CD4-positive, alpha-beta T cell (primary cell): ENCODE measurements at regions of chr16 and their contacts with region 1.

Region 1: DNA sequence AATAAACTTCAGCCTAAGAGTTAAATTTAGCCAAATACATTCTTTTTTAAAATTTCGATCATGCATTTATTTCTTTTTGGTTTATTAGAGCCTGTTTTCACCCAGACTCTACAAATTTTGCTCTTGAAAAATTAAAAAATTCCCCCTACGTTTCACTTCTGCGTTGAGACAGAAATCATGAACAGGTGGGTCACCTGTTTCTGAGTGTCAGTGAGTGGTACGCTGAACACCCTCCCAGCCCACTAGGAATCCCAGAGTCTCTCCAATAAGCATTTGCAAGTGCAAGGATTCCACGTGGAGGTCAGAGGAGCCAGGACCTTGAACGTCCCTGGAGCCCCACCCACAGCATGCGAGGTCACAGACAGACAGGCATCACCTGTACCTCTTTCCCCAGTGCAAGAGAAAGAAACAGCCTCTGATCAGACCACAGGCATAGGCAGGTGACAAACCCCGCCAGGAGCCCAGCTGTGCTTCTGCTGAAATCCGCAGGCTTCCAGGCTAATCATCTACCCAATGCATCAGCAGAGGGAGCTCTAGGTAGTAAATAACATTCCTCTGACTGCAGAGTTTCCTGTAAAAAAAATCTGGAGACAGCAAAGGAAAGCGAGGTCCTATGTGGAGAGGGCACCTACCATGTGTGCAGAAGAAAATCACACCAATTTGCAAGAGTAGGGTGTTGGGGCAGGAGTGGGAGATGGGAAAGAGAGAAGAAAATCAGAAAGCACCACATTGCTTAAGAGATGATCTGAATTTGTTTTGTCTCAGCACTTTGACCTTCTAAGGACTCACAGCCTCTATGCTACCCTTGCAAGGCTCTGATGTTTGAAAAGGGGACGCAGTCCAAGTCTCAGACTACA is 5.9 kb upstream of the XYLT1 start:
- DNase-seq: peak; percentile 24 to 77 (median 42)
- ATAC-seq: peak; percentile 85
- H3K4me3 ChIP-seq: no peak overlapping the region
- H3K4me3 Mint-ChIP-seq: no peak overlapping the region
- H3K27ac ChIP-seq: no peak overlapping the region
- H3K27ac Mint-ChIP-seq: no peak overlapping the region
- H3K4me1 ChIP-seq: peaks cover 20% of the 10 kb centered on the region
- H3K4me1 Mint-ChIP-seq: peaks cover 33% of the 10 kb centered on the region
- H3K27me3 ChIP-seq: peaks cover 0 to 2% of the 10 kb centered on the region in 2 experiments
- H3K27me3 Mint-ChIP-seq: peaks cover 7% of the 10 kb centered on the region
- CTCF ChIP-seq: peak; percentile 73

Region 2: GRCh38 chr16:16861546-16861945 is 615.1 kb before region 1 on chr16:
- CTCF ChIA-PET with region 1: no interaction called
- POLR2A ChIA-PET with region 1: no interaction called
- intact Hi-C with region 1: loop called (anchors 2 to 5 kb)
- DNase-seq: peak; percentile 35 to 71 (median 44)
- ATAC-seq: no peak
- H3K4me3 ChIP-seq: no peak overlapping the region
- H3K4me3 Mint-ChIP-seq: no peak overlapping the region
- H3K27ac ChIP-seq: no peak overlapping the region
- H3K27ac Mint-ChIP-seq: no peak overlapping the region
- H3K4me1 ChIP-seq: peaks cover 3% of the 10 kb centered on the region
- H3K4me1 Mint-ChIP-seq: no peaks in the 10 kb centered on the region
- H3K27me3 ChIP-seq: peaks cover 0 to 2% of the 10 kb centered on the region in 2 experiments
- H3K27me3 Mint-ChIP-seq: peaks cover 14% of the 10 kb centered on the region
- CTCF ChIP-seq: peak; percentile 82

Region 3: GRCh38 chr16:17211797-17212196 is 264.8 kb before region 1 on chr16:
- CTCF ChIA-PET with region 1: no interaction called
- POLR2A ChIA-PET with region 1: no interaction called
- intact Hi-C with region 1: loop called in 1 of 2 experiments (anchors 10 kb)
- DNase-seq: peak; percentile 3 to 64 (median 20)
- ATAC-seq: peak; percentile 65
- H3K4me3 ChIP-seq: no peak overlapping the region
- H3K4me3 Mint-ChIP-seq: no peak overlapping the region
- H3K27ac ChIP-seq: no peak overlapping the region
- H3K27ac Mint-ChIP-seq: no peak overlapping the region
- H3K4me1 ChIP-seq: peaks cover 7% of the 10 kb centered on the region
- H3K4me1 Mint-ChIP-seq: peaks cover 31% of the 10 kb centered on the region
- H3K27me3 ChIP-seq: no peaks in the 10 kb centered on the region
- H3K27me3 Mint-ChIP-seq: no peaks in the 10 kb centered on the region
- CTCF ChIP-seq: peak; percentile 63

Region 4: GRCh38 chr16:17277977-17278381 is 198.7 kb before region 1 on chr16:
- CTCF ChIA-PET with region 1: no interaction called
- POLR2A ChIA-PET with region 1: no interaction called
- intact Hi-C with region 1: loop called in 1 of 2 experiments (anchors 5 kb)
- DNase-seq: peak in 3 of 14 experiments; percentile 30 to 40 (median 34)
- ATAC-seq: no peak
- H3K4me3 ChIP-seq: no peak overlapping the region
- H3K4me3 Mint-ChIP-seq: no peak overlapping the region
- H3K27ac ChIP-seq: no peak overlapping the region
- H3K27ac Mint-ChIP-seq: no peak overlapping the region
- H3K4me1 ChIP-seq: peaks cover 30% of the 10 kb centered on the region
- H3K4me1 Mint-ChIP-seq: peaks cover 56% of the 10 kb centered on the region
- H3K27me3 ChIP-seq: no peaks in the 10 kb centered on the region
- H3K27me3 Mint-ChIP-seq: no peaks in the 10 kb centered on the region
- CTCF ChIP-seq: no peak

Region 5: DNA sequence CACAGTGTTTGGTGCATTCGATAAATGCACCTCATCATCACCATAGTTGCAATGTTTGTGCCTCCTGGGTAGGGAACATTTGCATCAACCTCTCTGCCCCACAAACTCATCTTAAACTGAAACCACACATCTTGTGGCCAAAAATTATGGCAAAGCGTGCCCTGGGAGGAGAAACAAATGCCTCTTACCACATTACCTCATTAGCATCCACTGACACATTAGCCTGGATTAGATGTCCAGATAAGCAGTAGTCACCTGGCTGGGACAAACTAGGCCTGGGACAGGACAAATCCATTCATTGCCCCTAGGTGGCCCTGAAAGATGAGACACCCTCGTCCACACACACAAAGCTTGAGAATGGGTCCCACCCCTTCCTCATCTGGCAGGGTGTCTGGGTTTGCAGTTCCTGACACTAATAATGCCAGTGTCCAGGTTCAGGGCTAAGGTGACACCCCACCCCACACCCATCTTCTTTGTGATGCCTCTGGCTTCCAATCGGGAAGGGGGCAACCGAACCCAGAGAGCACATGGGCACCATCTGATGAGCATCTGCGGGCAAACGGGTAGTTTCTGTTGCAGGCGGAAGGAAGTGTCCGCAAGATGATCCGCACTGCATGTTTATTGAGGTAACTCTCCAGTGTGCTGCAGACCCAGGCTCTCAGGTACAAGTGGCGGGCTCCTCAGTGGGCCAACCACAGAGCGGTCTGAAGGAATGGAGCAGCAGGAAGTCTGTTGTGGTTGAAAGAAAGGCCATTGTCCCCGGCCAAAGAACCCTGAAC is 14.5 kb before region 1 on chr16:
- CTCF ChIA-PET with region 1: no interaction called
- POLR2A ChIA-PET with region 1: no interaction called
- intact Hi-C with region 1: loop called in 1 of 2 experiments (anchors 2 kb)
- DNase-seq: peak in 2 of 14 experiments; percentile 31
- ATAC-seq: no peak
- H3K4me3 ChIP-seq: no peak overlapping the region
- H3K4me3 Mint-ChIP-seq: no peak overlapping the region
- H3K27ac ChIP-seq: no peak overlapping the region
- H3K27ac Mint-ChIP-seq: no peak overlapping the region
- H3K4me1 ChIP-seq: peaks cover 13% of the 10 kb centered on the region
- H3K4me1 Mint-ChIP-seq: peaks cover 65% of the 10 kb centered on the region
- H3K27me3 ChIP-seq: no peaks in the 10 kb centered on the region
- H3K27me3 Mint-ChIP-seq: no peaks in the 10 kb centered on the region
- CTCF ChIP-seq: no peak

Region 6: DNA sequence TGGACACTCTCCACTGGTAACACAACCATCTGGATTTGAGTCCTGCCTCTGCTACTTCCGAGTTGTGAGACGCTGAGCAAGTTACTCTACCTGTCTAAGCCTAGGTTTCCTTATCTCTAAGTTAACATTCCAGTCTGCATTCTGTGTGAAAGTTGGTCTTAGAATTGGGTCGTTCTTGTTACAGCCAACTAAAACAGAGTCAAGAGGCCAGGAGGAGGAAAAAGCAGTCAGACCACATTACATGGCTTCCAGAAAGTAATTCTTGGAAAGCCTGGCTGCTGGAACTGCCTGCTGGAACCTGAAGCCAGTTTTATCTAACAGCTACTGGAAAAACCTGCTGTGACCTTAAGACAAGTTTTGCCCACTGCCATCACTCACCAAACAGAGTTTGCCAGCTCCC is 32.6 kb after region 1 on chr16:
- CTCF ChIA-PET with region 1: no interaction called
- POLR2A ChIA-PET with region 1: no interaction called
- intact Hi-C with region 1: no loop called
- DNase-seq: no peak
- ATAC-seq: no peak
- H3K4me3 ChIP-seq: no peak overlapping the region
- H3K4me3 Mint-ChIP-seq: no peak overlapping the region
- H3K27ac ChIP-seq: no peak overlapping the region
- H3K27ac Mint-ChIP-seq: no peak overlapping the region
- H3K4me1 ChIP-seq: no peaks in the 10 kb centered on the region
- H3K4me1 Mint-ChIP-seq: no peaks in the 10 kb centered on the region
- H3K27me3 ChIP-seq: peaks cover 0 to 3% of the 10 kb centered on the region in 2 experiments
- H3K27me3 Mint-ChIP-seq: peaks cover 5% of the 10 kb centered on the region
- CTCF ChIP-seq: no peak

Region 7: DNA sequence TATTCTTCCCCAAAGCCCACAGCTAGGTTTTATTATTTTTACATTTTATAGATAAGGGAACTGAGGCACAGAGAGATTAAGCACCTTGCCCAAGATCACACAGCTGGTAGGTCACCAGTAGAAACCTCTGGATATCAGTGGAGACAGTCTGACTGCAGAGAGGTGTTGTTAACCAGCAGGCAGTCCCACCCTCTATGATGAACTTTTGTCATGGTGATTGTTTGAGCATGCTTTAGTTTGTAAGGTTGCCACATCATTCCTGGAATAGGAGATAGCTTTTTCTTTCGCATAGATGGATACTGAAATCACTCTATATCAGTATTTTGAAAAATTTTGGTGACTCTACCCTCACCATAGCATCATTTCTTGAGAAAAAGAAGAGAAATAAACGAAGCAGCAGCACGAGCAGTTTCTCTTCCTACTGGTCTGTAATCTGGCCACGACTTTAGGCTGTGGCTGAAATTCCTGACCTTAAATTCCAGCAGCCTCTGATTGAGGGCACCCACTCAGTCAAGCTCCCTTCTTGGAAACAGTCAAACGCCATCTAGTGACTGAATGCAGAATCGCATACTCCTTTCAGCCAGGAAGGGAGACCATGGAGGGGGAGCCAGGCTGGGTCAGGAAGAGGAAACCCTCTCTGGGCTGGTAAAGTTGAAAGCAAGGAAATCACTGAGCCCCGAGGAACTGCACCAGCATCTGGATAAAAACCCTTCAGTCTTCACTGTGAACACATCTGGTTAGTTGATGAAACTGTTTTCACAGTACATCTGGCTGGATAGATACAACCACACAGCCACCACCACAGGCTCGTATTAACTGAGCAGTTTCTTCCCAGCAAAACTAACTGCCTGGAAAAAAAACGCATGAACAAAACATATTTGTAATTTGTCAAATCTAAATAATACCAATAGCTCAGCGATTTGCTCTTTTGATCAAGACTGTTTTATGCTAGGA is 102.6 kb after region 1 on chr16:
- CTCF ChIA-PET with region 1: interaction called, 5 read pairs
- POLR2A ChIA-PET with region 1: no interaction called
- intact Hi-C with region 1: loop called (anchors 2 to 5 kb)
- DNase-seq: peak; percentile 6 to 80 (median 46)
- ATAC-seq: peak; percentile 73
- H3K4me3 ChIP-seq: no peak overlapping the region
- H3K4me3 Mint-ChIP-seq: no peak overlapping the region
- H3K27ac ChIP-seq: no peak overlapping the region
- H3K27ac Mint-ChIP-seq: no peak overlapping the region
- H3K4me1 ChIP-seq: no peaks in the 10 kb centered on the region
- H3K4me1 Mint-ChIP-seq: no peaks in the 10 kb centered on the region
- H3K27me3 ChIP-seq: no peaks in the 10 kb centered on the region
- H3K27me3 Mint-ChIP-seq: peaks cover 5% of the 10 kb centered on the region
- CTCF ChIP-seq: peak; percentile 93